Dendritic cell treated with granulocyte-macrophage colony-stimulating factor and Interleukin-4, amounts not matched to agents 40 ng/mL and 50 ng/mL, for 4 days (primary cell): ENCODE measurements at regions of chr19 and their contacts with region 1.

Region 1: GRCh38 chr19:11203194-11204075 is 6.1 kb upstream of the KANK2 start:
- H3K4me3 Mint-ChIP-seq: no peak overlapping the region
- H3K27ac Mint-ChIP-seq: no peak overlapping the region
- H3K4me1 Mint-ChIP-seq: peaks cover 18% of the 10 kb centered on the region
- H3K27me3 Mint-ChIP-seq: peaks cover 23% of the 10 kb centered on the region

Region 2: DNA sequence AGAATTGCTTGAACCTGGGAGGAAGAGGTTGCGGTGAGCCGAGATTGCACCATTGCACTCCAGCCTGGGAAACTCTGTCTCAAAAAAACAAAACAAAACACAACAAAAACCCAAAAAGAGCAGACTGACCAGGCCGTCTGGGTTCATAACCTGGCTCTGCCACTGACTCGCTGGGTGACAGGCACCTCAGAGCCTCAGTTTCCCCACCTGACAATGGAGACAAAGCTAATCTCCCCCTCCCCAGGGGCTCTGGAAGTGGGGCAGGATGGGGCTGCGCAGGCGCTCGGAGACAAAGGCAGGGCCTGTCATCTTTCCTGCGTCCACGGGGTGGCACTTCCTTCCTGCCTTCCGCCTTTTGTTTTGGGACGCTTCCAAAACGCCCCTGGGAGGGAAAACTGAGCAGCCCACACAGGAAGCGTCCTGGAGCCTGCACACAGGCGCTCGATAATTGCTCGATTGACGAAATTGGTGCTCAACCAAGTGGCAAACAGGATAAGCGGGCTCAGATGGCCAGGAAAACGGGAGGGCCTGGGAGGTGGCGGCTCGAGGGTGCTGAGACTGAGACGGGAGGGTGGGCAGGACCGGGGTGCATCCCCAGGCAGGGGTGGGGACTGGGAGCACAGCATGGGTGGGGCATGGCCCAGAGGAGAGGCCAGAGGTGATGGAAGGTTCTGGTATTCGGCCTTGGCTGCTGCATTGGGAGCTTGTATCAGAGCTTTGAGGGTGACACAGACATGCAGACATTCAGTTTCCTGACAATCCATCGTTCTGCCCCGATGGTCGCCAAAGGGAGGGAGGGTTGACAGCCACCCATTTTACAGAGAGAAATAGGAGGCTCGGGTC is 65.7 kb before region 1 on chr19:
- intact Hi-C with region 1: loop called (anchors 1 kb)
- H3K4me3 Mint-ChIP-seq: peak overlapping the region; percentile 81
- H3K27ac Mint-ChIP-seq: peak overlapping the region; percentile 71
- H3K4me1 Mint-ChIP-seq: peaks cover 33% of the 10 kb centered on the region
- H3K27me3 Mint-ChIP-seq: peaks cover 29% of the 10 kb centered on the region

Region 3: GRCh38 chr19:11293433-11294389 is 90.3 kb after region 1 on chr19:
- intact Hi-C with region 1: no loop called
- H3K4me3 Mint-ChIP-seq: peak overlapping the region; percentile 61
- H3K27ac Mint-ChIP-seq: peak overlapping the region; percentile 48
- H3K4me1 Mint-ChIP-seq: peaks cover 53% of the 10 kb centered on the region
- H3K27me3 Mint-ChIP-seq: peaks cover 4% of the 10 kb centered on the region